ENCODE measurements at regions of chr11 and their contacts with region 1.

Region 1: DNA sequence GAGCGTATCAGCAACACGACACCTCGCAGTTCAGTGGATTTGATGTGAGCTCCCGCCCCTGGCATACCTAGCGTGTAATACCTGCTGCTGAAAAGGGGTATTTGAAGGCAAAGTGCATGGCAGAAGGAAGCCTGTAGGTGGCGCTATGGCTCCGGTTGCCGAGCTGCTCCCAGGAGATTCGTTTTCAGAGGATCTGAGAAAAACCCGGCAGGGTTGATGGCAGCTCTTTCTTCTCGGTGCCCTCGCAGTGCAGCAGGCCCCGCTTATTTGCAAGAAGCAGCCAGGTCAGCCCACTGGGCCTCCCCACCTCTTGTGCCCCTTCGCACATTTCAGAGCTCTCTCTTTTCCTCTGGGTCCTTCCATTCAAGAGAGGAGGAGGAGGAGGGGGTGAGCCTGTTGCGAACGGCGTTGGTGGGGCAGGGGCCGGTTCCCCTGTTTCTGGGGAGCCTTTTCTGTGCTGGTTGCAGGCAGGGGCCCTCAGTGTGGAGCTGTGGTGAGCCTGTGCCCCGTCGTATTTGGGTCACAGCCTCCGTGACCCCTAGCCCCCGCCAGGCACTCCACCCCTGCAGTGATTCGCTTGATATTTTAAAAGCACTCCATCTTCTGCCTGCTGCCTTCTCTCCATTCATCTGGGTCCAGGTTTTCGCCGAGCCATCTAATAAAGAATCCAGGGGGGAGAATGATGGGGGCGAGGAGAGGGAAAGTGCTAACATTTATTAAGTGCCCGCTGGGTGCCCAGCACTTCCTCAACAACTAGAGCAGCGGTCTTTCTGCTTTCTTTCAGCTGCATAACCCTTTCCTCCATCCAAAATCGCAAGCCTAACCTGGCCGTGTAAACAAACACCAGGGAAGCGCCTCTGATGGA is 85.3 kb upstream of the SYT13 start:
- DNase-seq: peak; percentile 71
- ATAC-seq: peak; percentile 72

Region 2: GRCh38 chr11:45765836-45766235 is 394.4 kb after region 1 on chr11:
- intact Hi-C with region 1: loop called (anchors 10 kb)
- DNase-seq: no peak
- ATAC-seq: no peak